ENCODE measurements at regions of chr6 and their contacts with region 1.

Region 1: GRCh38 chr6:79869600-79870084 is 77.7 kb downstream of the ELOVL4 start:
- DNase-seq: peak; percentile 65 to 73 (median 70)
- H3K4me3 ChIP-seq: no peak overlapping the region
- H3K4me3 Mint-ChIP-seq: peak overlapping the region; percentile 16 to 79 (median 70)
- H3K27ac ChIP-seq: no peak overlapping the region
- H3K27ac Mint-ChIP-seq: peak overlapping the region in 4 of 7 donors; percentile 52 to 74 (median 64)
- H3K4me1 ChIP-seq: peaks cover 3% of the 10 kb centered on the region
- H3K4me1 Mint-ChIP-seq: peaks cover 7 to 20% (median 9%) of the 10 kb centered on the region in 4 donors
- H3K27me3 ChIP-seq: no peaks in the 10 kb centered on the region
- H3K27me3 Mint-ChIP-seq: peaks cover 3 to 14% of the 10 kb centered on the region in 2 donors

Region 2: GRCh38 chr6:79777713-79778579 is 91.7 kb before region 1 on chr6:
- CTCF ChIA-PET with region 1: interaction called, 12 read pairs
- POLR2A ChIA-PET with region 1: no interaction called
- intact Hi-C with region 1: loop called (anchors 1 kb)
- DNase-seq: peak; percentile 79 to 82 (median 81)
- H3K4me3 ChIP-seq: peak overlapping the region; percentile 11 to 67
- H3K4me3 Mint-ChIP-seq: peak overlapping the region; percentile 79 to 87 (median 80)
- H3K27ac ChIP-seq: no peak overlapping the region
- H3K27ac Mint-ChIP-seq: peak overlapping the region in 6 of 7 donors; percentile 23 to 65 (median 58)
- H3K4me1 ChIP-seq: peaks cover 7% of the 10 kb centered on the region
- H3K4me1 Mint-ChIP-seq: peaks cover 4 to 11% (median 8%) of the 10 kb centered on the region in 4 donors
- H3K27me3 ChIP-seq: no peaks in the 10 kb centered on the region
- H3K27me3 Mint-ChIP-seq: no peaks in the 10 kb centered on the region

Region 3: GRCh38 chr6:79911992-79912391 is 42.4 kb after region 1 on chr6:
- CTCF ChIA-PET with region 1: interaction called, 11 read pairs
- POLR2A ChIA-PET with region 1: no interaction called
- intact Hi-C with region 1: no loop called
- DNase-seq: no peak
- H3K4me3 ChIP-seq: no peak overlapping the region
- H3K4me3 Mint-ChIP-seq: no peak overlapping the region
- H3K27ac ChIP-seq: no peak overlapping the region
- H3K27ac Mint-ChIP-seq: no peak overlapping the region
- H3K4me1 ChIP-seq: peaks cover 10% of the 10 kb centered on the region
- H3K4me1 Mint-ChIP-seq: peaks cover 4 to 15% (median 7%) of the 10 kb centered on the region in 4 donors
- H3K27me3 ChIP-seq: no peaks in the 10 kb centered on the region
- H3K27me3 Mint-ChIP-seq: peaks cover 3 to 5% of the 10 kb centered on the region in 2 donors

Region 4: GRCh38 chr6:80004173-80005072 is 134.8 kb after region 1 on chr6 and contains the start of gene TTK:
- CTCF ChIA-PET with region 1: interaction called, 8 read pairs
- POLR2A ChIA-PET with region 1: no interaction called
- intact Hi-C with region 1: loop called (anchors 5 kb)
- DNase-seq: peak; percentile 93 to 96 (median 94)
- H3K4me3 ChIP-seq: peak within 1 kb of the TSS; percentile 42 to 95
- H3K4me3 Mint-ChIP-seq: peak within 1 kb of the TSS; percentile 88 to 97 (median 94)
- H3K27ac ChIP-seq: peak within 1 kb of the TSS; percentile 81
- H3K27ac Mint-ChIP-seq: peak within 1 kb of the TSS; percentile 89 to 99 (median 98)
- H3K4me1 ChIP-seq: peaks cover 25% of the 10 kb centered on the region
- H3K4me1 Mint-ChIP-seq: peaks cover 15 to 25% (median 20%) of the 10 kb centered on the region in 4 donors
- H3K27me3 ChIP-seq: no peaks in the 10 kb centered on the region
- H3K27me3 Mint-ChIP-seq: peaks cover 2 to 3% of the 10 kb centered on the region in 2 donors
- total RNA-seq, gene TTK: 0.61 to 0.87 TPM

Region 5: GRCh38 chr6:80106418-80107235 is 237.0 kb after region 1 on chr6 and contains the start of gene BCKDHB:
- CTCF ChIA-PET with region 1: interaction called, 8 read pairs
- POLR2A ChIA-PET with region 1: no interaction called
- intact Hi-C with region 1: loop called (anchors 5 kb)
- DNase-seq: peak; percentile 98 to 99 (median 98)
- H3K4me3 ChIP-seq: peak within 1 kb of the TSS; percentile 52 to 54
- H3K4me3 Mint-ChIP-seq: peak within 1 kb of the TSS; percentile 87 to 95 (median 92)
- H3K27ac ChIP-seq: peak within 1 kb of the TSS; percentile 50
- H3K27ac Mint-ChIP-seq: peak within 1 kb of the TSS; percentile 76 to 95 (median 92)
- H3K4me1 ChIP-seq: peaks cover 16% of the 10 kb centered on the region
- H3K4me1 Mint-ChIP-seq: peaks cover 12 to 22% (median 18%) of the 10 kb centered on the region in 4 donors
- H3K27me3 ChIP-seq: no peaks in the 10 kb centered on the region
- H3K27me3 Mint-ChIP-seq: peaks cover 1 to 3% of the 10 kb centered on the region in 2 donors
- total RNA-seq, gene BCKDHB: 11.8 to 16.0 TPM

Measured in CD4-positive, alpha-beta memory T cell (primary cell).